GM10248 (cell line): ENCODE measurements at regions of chr4 and their contacts with region 1.

Region 1: DNA sequence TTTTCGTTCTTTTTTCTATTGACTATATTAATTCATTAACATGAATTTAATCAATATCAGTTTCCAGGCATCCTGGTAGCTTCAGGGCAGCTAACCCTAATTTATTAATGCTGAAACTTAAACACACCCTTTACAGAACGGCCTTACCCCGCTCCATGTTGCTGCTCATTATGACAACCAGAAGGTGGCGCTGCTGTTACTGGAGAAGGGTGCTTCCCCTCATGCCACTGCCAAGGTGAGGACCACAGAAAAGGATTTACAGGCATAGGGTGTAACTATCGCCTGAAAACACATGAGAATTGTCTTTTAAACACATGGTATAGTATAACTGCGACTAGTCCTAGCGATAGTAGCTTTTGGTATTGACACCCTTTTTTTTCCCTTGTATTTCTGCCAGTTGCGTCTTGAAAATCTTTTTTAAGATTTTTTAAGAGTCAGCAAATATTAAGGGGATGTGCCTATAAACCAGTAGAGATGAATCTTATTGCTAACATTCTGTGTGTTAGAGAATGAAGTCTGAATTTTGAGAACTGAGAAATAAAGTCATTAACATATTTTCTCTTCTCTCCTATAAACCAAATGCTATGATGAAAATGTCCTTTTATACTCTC is 229.0 kb downstream of the ANK2 start:
- DNase-seq: peak; percentile 65
- CTCF ChIP-seq: peak; percentile 88

Region 2: GRCh38 chr4:113289766-113290165 is 11.3 kb after region 1 on chr4:
- CTCF ChIA-PET with region 1: interaction called, 30 read pairs
- POLR2A ChIA-PET with region 1: no interaction called
- DNase-seq: no peak
- CTCF ChIP-seq: no peak

Region 3: DNA sequence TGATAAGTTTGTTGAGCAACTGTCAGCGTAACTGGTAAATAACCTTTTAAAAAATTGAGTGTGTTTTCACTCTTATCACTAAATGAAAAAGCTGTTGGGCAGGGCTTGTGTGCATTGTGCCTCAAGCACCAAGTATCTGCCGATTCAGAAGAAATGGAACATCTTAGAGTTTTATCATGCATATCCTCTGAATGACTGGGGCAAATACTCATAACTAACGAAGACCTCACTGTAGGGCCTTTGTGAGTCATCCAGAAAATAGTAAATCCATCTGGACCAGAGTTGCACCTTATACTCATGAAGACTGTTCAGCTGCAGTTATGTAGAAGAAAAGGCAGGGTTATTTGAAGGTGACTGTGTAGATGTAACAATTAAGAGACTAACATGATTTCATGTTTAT is 261.0 kb after region 1 on chr4:
- CTCF ChIA-PET with region 1: no interaction called
- POLR2A ChIA-PET with region 1: no interaction called
- DNase-seq: peak; percentile 8
- CTCF ChIP-seq: no peak